Esophagus squamous epithelium (tissue), 5 donors: ENCODE measurements at regions of chr6 and their contacts with region 1.

Region 1: DNA sequence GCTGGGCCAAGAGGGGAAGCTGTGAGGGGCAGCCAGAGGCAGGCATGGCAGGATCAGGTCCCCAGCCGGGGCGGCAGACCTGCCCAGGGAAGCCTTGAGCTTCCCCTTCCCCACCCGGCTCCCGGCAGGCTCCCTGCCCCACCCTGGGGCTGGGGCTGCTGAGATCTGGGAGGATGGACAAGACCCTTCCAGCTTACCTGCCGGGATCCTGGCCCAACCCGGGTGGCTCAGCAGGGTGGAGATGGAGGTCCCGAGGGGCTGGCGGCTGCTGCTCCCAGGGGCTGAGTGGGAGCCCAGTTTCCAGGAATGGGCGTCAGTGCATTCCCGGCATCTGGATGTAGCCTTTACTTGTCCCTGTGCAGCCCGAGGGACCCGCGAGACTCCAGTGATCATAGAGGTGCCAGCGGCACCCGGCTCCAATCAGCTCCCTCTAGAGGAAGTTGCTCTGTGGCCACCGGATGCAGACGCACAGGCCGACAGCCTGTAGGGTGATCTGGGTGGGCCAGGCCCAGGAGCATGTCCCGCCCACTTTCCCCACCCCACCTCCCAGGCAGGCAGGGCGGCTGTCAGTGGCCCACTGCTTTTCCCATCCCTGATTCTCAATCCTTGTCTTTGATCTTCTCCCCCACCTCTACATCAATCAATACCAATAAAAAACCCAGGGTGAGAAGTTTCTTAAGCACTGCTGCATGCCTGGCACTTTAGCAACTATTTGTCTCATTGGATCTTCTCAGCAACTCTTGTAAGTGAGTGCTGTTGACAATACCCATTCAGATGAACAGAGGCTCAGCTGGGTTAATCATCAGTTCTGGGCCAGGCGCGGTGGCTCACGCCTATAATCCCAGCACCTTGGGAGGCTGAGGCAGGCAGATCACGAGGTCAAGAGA is at the start of gene BAK1:
- DNase-seq: peak; percentile 46
- H3K4me3 ChIP-seq: peak within 1 kb of the TSS; percentile 65 to 85 (median 78)
- H3K27ac ChIP-seq: peak within 1 kb of the TSS; percentile 94 to 97 (median 94)
- H3K4me1 ChIP-seq: peaks cover 32 to 54% (median 34%) of the 10 kb centered on the region in 3 donors
- H3K27me3 ChIP-seq: no peaks in the 10 kb centered on the region
- CTCF ChIP-seq: peak; percentile 32 to 64 (median 46)
- POLR2A ChIP-seq: peak in 3 of 4 donors; percentile 52 to 94 (median 83)
- total RNA-seq, gene BAK1: 14.3 to 26.2 (median 20.0) TPM

Region 2: DNA sequence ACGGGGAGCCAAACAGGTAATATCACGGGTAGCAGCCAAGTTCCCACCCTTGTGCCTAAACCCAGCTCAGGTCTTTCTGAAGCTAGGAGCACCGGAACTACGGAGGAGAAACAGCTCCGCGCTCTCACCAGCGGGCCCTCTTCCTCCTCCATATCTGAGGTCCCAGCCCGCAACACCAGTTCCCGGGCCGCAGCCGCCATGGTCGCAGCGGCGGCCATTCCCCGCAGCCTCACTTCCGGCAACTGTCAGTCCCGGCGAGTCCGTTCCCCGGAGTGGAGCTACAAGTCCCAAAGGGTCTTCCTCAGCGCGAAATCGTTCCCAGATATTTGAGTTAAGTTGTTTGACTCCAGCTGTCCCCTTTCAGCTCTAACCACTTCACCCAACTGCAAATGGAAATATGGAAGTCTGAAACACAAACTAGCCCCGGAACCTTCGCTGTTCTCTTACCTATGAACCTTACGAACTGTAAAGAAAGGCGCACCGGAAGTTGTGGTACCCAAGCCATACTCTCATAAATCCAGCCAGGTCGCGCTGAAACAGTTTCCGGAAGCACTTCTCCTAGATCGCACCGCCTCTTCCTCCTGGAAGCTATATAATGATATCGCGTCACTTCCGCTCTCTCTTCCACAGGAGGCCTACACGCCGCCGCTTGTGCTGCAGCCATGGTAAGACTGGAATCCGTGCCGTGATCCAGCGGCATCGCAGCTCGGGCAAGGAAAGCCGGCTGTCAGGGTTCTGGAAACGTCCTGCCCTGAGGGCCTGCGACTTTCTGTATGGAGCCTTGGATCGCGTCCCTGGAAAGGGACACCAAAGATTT is 308.4 kb before region 1 on chr6 and contains the starts of genes RPS18 and VPS52:
- intact Hi-C with region 1: no loop called
- DNase-seq: peak; percentile 90
- H3K4me3 ChIP-seq: peak within 1 kb of the TSS; percentile 75 to 91 (median 80)
- H3K27ac ChIP-seq: peak within 1 kb of the TSS; percentile 92 to 98 (median 96)
- H3K4me1 ChIP-seq: peaks cover 19 to 66% (median 51%) of the 10 kb centered on the region in 3 donors
- H3K27me3 ChIP-seq: no peaks in the 10 kb centered on the region
- CTCF ChIP-seq: peak in 2 of 6 experiments; percentile 7
- POLR2A ChIP-seq: peak in 3 of 4 donors; percentile 95 to 97 (median 96)
- total RNA-seq, gene RPS18: 1,955 to 5,522 (median 4,042) TPM
- total RNA-seq, gene VPS52: 34.1 to 45.5 (median 39.8) TPM

Region 3: GRCh38 chr6:33417903-33418689 is 162.0 kb before region 1 on chr6 and contains the start of gene CUTA:
- intact Hi-C with region 1: loop called (anchors 10 kb)
- DNase-seq: peak; percentile 97
- H3K4me3 ChIP-seq: peak within 1 kb of the TSS; percentile 41 to 85 (median 72)
- H3K27ac ChIP-seq: peak within 1 kb of the TSS; percentile 89 to 99 (median 96)
- H3K4me1 ChIP-seq: peaks cover 35 to 74% (median 37%) of the 10 kb centered on the region in 3 donors
- H3K27me3 ChIP-seq: no peaks in the 10 kb centered on the region
- CTCF ChIP-seq: peak; percentile 21 to 53 (median 40)
- POLR2A ChIP-seq: peak in 3 of 4 donors; percentile 54 to 82 (median 74)
- total RNA-seq, gene CUTA: 46.0 to 93.1 (median 69.4) TPM

Region 4: GRCh38 chr6:33633462-33634158 is 53.5 kb after region 1 on chr6:
- intact Hi-C with region 1: loop called (anchors 10 kb)
- DNase-seq: no peak
- H3K4me3 ChIP-seq: peak overlapping the region; percentile 17 to 68 (median 48)
- H3K27ac ChIP-seq: peak overlapping the region; percentile 67 to 75 (median 68)
- H3K4me1 ChIP-seq: peaks cover 30 to 56% (median 32%) of the 10 kb centered on the region in 3 donors
- H3K27me3 ChIP-seq: no peaks in the 10 kb centered on the region
- CTCF ChIP-seq: no peak
- POLR2A ChIP-seq: peak in 1 of 4 donors; percentile 8